OCI-LY7 (cell line): ENCODE measurements at regions of chr2 and their contacts with region 1.

Region 1: GRCh38 chr2:112749755-112750559 is 14.5 kb downstream of the CKAP2L start:
- DNase-seq: peak; percentile 70
- H3K4me3 ChIP-seq: no peak overlapping the region
- H3K27ac ChIP-seq: no peak overlapping the region
- H3K4me1 ChIP-seq: peaks cover 7% of the 10 kb centered on the region
- CTCF ChIP-seq: peak; percentile 96

Region 2: GRCh38 chr2:112764071-112765044 is 14.4 kb after region 1 on chr2 and contains the start of gene CKAP2L:
- CTCF ChIA-PET with region 1: interaction called, 3 read pairs
- POLR2A ChIA-PET with region 1: interaction called, 9 read pairs
- intact Hi-C with region 1: loop called (anchors 1 kb)
- DNase-seq: peak; percentile 99
- H3K4me3 ChIP-seq: peak within 1 kb of the TSS; percentile 82
- H3K27ac ChIP-seq: peak within 1 kb of the TSS; percentile 75
- H3K4me1 ChIP-seq: peaks cover 25% of the 10 kb centered on the region
- CTCF ChIP-seq: no peak; the same call in 1 of the 2 replicates
- total RNA-seq, gene CKAP2L: 28.8 and 31.8 TPM in 2 replicates

Region 3: GRCh38 chr2:112884869-112885505 is 135.0 kb after region 1 on chr2:
- CTCF ChIA-PET with region 1: interaction called, 19 read pairs
- POLR2A ChIA-PET with region 1: interaction called, 3 read pairs
- intact Hi-C with region 1: loop called (anchors 1 kb)
- DNase-seq: peak; percentile 68
- H3K4me3 ChIP-seq: no peak overlapping the region
- H3K27ac ChIP-seq: no peak overlapping the region
- H3K4me1 ChIP-seq: peaks cover 20% of the 10 kb centered on the region
- CTCF ChIP-seq: peak; percentile 98

Region 4: DNA sequence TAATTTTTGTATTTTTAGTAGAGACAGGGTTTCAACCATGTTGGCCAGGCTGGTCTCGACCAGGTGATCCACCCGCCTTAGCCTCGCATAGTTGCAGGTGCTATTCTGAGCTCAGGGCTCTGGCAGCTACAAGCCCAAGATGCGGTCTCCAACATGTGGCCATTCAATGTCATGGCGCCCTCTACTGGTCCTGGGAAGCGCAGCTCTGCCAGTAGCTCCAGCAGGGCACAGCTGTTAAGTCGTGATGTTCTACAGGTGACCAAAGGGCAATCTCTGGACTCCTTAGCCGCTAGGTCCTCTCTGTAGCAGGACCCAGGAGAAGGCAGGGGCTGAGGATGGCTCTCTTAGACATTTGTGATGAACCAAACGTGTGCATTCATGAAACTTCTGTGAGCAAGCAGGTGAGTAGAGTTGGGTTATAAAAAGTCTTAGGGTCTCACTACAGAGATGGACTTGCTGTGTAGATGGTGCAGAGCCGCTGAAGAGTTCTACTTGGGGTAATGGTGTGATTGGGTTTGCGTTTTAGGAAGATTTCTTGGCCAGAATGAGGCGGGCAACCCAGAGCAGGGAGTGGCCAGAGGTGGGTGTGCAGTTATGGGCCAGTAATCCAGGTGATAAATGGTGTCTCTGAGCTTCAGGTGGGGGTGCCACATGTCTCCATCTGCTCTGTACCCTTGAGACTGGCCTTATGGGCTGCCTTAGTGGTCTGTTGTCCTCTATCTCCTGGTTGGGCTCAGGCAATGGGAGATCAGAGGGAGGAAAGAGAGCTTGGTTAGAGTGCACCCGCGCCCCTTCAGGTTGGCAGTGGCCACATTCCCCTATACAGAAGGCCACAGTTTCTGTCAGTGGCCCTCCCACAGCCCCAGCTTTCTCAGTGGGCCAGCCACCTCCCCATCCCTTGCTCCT is 192.0 kb after region 1 on chr2:
- CTCF ChIA-PET with region 1: no interaction called
- POLR2A ChIA-PET with region 1: interaction called, 4 read pairs
- intact Hi-C with region 1: loop called (anchors 2 kb)
- DNase-seq: peak; percentile 68
- H3K4me3 ChIP-seq: no peak overlapping the region
- H3K27ac ChIP-seq: no peak overlapping the region
- H3K4me1 ChIP-seq: no peaks in the 10 kb centered on the region
- CTCF ChIP-seq: peak; percentile 85